CD8-positive, alpha-beta memory T cell (primary cell): ENCODE measurements at regions of chr1 and their contacts with region 1.

Region 1: DNA sequence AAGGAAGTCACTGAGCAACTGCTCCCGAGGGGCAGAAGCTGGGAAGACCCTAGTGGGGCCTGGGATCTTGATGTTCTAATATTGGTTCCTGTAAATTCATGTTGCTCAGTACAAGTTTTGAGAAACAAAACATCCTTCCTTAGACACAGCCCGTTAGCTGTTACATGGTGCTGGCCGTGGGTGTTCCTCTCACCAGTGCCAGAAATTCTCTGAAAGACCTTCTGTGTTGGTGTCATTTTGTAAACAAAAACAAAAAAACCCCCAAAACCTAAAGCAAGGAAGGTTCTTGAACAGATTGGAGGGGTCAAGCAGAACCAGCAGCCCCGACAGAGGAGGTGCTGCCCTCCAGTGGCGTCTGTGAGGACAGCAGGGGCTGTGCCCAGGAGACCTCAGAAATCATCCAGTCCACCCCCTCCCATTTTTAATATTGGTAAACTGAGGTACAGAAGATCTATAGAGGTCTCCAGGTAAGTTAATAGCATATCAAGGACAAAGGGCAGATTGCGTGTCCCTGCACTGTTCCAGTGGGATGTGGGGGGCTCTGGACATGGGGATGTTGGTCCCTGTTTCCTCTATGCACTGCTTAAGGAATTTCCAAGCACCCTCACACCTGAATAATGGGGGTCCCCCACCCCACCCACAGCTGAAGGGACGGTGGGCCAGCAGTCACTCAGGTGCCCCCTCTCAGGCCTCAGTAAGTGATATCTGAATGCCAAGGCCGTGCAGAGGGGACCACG is 38.2 kb downstream of the SLC2A7 start:
- DNase-seq: peak; percentile 39 to 69 (median 50)
- H3K4me3 ChIP-seq: no peak overlapping the region
- H3K4me3 Mint-ChIP-seq: peak overlapping the region in 4 of 7 donors; percentile 34 to 67 (median 52)
- H3K27ac ChIP-seq: no peak overlapping the region
- H3K27ac Mint-ChIP-seq: peak overlapping the region in 6 of 8 donors; percentile 9 to 60 (median 21)
- H3K4me1 ChIP-seq: peaks cover 23% of the 10 kb centered on the region
- H3K4me1 Mint-ChIP-seq: peaks cover 16 to 20% (median 19%) of the 10 kb centered on the region in 3 donors
- H3K27me3 ChIP-seq: no peaks in the 10 kb centered on the region
- H3K27me3 Mint-ChIP-seq: peaks cover 0 to 1% of the 10 kb centered on the region in 2 donors

Region 2: GRCh38 chr1:8817406-8818324 is 170.4 kb before region 1 on chr1 and contains the start of gene RERE:
- CTCF ChIA-PET with region 1: no interaction called
- POLR2A ChIA-PET with region 1: interaction called, 13 read pairs
- DNase-seq: peak; percentile 94 to 98 (median 97)
- H3K4me3 ChIP-seq: peak within 1 kb of the TSS; percentile 80
- H3K4me3 Mint-ChIP-seq: peak within 1 kb of the TSS; percentile 86 to 98 (median 91)
- H3K27ac ChIP-seq: peak within 1 kb of the TSS; percentile 93
- H3K27ac Mint-ChIP-seq: peak within 1 kb of the TSS; percentile 89 to 100 (median 97)
- H3K4me1 ChIP-seq: peaks cover 24% of the 10 kb centered on the region
- H3K4me1 Mint-ChIP-seq: peaks cover 37 to 46% (median 46%) of the 10 kb centered on the region in 3 donors
- H3K27me3 ChIP-seq: no peaks in the 10 kb centered on the region
- H3K27me3 Mint-ChIP-seq: peaks cover 6 to 13% of the 10 kb centered on the region in 2 donors
- total RNA-seq, gene RERE: 37.9 to 39.2 TPM

Region 3: DNA sequence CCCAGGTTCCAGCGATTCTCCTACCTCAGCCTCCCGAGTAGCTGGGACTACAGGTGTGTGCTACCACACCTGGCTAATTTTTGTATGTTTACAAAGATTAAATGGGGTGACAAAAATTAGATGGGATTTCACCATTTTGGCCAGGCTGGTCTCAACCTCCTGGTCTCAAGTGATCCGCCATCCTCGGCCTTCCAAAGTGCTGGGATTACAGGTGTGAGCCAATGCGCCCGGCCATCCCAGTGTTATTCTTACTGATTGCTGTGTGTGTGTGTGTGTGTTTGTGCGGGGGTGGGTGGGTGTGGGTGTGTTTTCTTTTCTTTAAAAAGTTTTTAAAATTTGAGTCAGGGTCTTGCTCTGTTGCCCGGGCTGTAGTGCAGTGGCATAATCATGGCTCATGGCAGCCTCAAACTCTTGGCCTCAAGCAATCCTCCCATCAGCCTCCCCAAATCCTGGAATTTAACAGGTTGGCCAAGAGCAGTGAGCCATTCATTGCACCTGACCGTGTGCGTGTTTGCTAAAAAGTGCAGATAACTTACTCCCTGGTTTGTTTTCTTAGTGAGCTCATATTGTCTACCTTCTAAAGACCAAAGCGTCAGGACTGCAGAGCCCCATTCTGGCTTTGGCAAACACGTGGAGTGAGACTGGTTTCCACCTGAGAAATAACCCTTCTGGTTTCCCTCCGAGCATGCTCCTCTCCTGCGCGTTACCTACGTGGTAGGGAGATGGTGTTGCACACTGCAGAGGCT is 74.8 kb before region 1 on chr1:
- CTCF ChIA-PET with region 1: interaction called, 50 read pairs
- POLR2A ChIA-PET with region 1: interaction called, 4 read pairs
- DNase-seq: no peak
- H3K4me3 ChIP-seq: no peak overlapping the region
- H3K4me3 Mint-ChIP-seq: no peak overlapping the region
- H3K27ac ChIP-seq: no peak overlapping the region
- H3K27ac Mint-ChIP-seq: no peak overlapping the region
- H3K4me1 ChIP-seq: peaks cover 2% of the 10 kb centered on the region
- H3K4me1 Mint-ChIP-seq: peaks cover 3 to 8% (median 8%) of the 10 kb centered on the region in 3 donors
- H3K27me3 ChIP-seq: no peaks in the 10 kb centered on the region
- H3K27me3 Mint-ChIP-seq: peaks cover 0 to 8% of the 10 kb centered on the region in 2 donors

Region 4: DNA sequence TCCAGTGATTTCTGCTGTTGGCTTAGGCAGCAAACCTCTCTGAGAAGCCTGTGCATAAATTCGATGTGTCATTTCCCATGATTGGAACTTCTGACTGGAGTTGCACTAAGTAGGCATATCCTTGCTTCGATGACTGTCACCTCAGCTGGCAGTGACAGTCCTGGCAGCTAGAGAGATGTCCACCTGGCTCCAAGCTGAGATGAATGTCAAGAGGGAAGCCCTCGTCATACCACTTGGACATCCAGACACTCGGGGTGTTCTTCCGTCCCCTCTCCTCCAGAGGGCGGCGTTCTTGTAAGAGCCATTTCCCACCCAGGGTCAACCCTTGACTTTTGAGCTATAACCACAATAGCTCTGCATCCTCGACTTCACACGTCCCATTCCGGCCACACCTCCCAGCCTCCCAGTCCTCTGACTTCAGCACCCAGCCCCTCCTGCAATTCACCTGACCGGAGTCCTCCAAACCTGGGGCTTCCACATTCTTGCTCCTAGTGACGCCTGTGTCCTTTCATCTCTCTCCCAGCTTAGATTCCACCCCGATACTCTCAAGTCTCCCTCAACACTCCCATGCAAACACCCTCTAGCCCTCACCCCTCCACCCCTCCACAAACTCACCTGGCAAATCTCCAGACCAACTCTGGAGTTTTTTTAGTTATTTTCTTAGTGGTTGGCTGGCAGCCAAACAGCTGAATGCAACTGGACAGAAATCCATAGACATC is 25.1 kb before region 1 on chr1:
- CTCF ChIA-PET with region 1: interaction called, 12 read pairs
- POLR2A ChIA-PET with region 1: no interaction called
- DNase-seq: peak in 2 of 5 donors; percentile 52 to 58
- H3K4me3 ChIP-seq: peak overlapping the region; percentile 10
- H3K4me3 Mint-ChIP-seq: peak overlapping the region in 4 of 7 donors; percentile 54 to 66 (median 63)
- H3K27ac ChIP-seq: no peak overlapping the region
- H3K27ac Mint-ChIP-seq: peak overlapping the region in 6 of 8 donors; percentile 1 to 84 (median 46)
- H3K4me1 ChIP-seq: peaks cover 52% of the 10 kb centered on the region
- H3K4me1 Mint-ChIP-seq: peaks cover 22 to 63% (median 57%) of the 10 kb centered on the region in 3 donors
- H3K27me3 ChIP-seq: no peaks in the 10 kb centered on the region
- H3K27me3 Mint-ChIP-seq: peaks cover 4 to 14% of the 10 kb centered on the region in 2 donors